Naive thymus-derived CD4-positive, alpha-beta T cell (primary cell): ENCODE measurements at regions of chr3 and their contacts with region 1.

Region 1: GRCh38 chr3:4834403-4834866 is 144.8 kb upstream of the BHLHE40 start:
- DNase-seq: peak in 5 of 9 donors; percentile 28 to 79 (median 39)
- ATAC-seq: peak; percentile 64
- H3K4me3 ChIP-seq: no peak overlapping the region
- H3K4me3 Mint-ChIP-seq: peak overlapping the region; percentile 21 to 86 (median 47)
- H3K27ac ChIP-seq: peak overlapping the region; percentile 55
- H3K27ac Mint-ChIP-seq: peak overlapping the region; percentile 74 to 99 (median 90)
- H3K4me1 ChIP-seq: peaks cover 53 to 67% of the 10 kb centered on the region in 2 donors
- H3K4me1 Mint-ChIP-seq: peaks cover 56 to 89% (median 80%) of the 10 kb centered on the region in 7 donors
- H3K27me3 ChIP-seq: no peaks in the 10 kb centered on the region
- H3K27me3 Mint-ChIP-seq: peaks cover 0 to 3% (median 0%) of the 10 kb centered on the region in 5 donors

Region 2: GRCh38 chr3:4741404-4742307 is 92.8 kb before region 1 on chr3:
- CTCF ChIA-PET with region 1: no interaction called
- POLR2A ChIA-PET with region 1: no interaction called
- intact Hi-C with region 1: loop called in 1 of 2 experiments (anchors 2 kb)
- DNase-seq: no peak
- ATAC-seq: peak; percentile 39
- H3K4me3 ChIP-seq: no peak overlapping the region
- H3K4me3 Mint-ChIP-seq: peak overlapping the region in 6 of 10 donors; percentile 26 to 75 (median 66)
- H3K27ac ChIP-seq: no peak overlapping the region
- H3K27ac Mint-ChIP-seq: peak overlapping the region in 5 of 9 donors; percentile 22 to 94 (median 67)
- H3K4me1 ChIP-seq: peaks cover 37 to 43% of the 10 kb centered on the region in 2 donors
- H3K4me1 Mint-ChIP-seq: peaks cover 44 to 70% (median 51%) of the 10 kb centered on the region in 7 donors
- H3K27me3 ChIP-seq: no peaks in the 10 kb centered on the region
- H3K27me3 Mint-ChIP-seq: no peaks in the 10 kb centered on the region

Region 3: GRCh38 chr3:4845882-4846281 is 11.4 kb after region 1 on chr3:
- CTCF ChIA-PET with region 1: interaction called, 3 read pairs
- POLR2A ChIA-PET with region 1: interaction called, 7 read pairs
- intact Hi-C with region 1: loop called (anchors 1 kb)
- DNase-seq: peak in 7 of 9 donors; percentile 43 to 76 (median 60)
- ATAC-seq: peak; percentile 87
- H3K4me3 ChIP-seq: no peak overlapping the region
- H3K4me3 Mint-ChIP-seq: peak overlapping the region in 9 of 10 donors; percentile 2 to 68 (median 46)
- H3K27ac ChIP-seq: peak overlapping the region; percentile 81
- H3K27ac Mint-ChIP-seq: peak overlapping the region; percentile 57 to 93 (median 76)
- H3K4me1 ChIP-seq: peaks cover 38 to 87% of the 10 kb centered on the region in 2 donors
- H3K4me1 Mint-ChIP-seq: peaks cover 39 to 99% (median 93%) of the 10 kb centered on the region in 7 donors
- H3K27me3 ChIP-seq: no peaks in the 10 kb centered on the region
- H3K27me3 Mint-ChIP-seq: no peaks in the 10 kb centered on the region

Region 4: GRCh38 chr3:4888913-4889846 is 54.7 kb after region 1 on chr3:
- CTCF ChIA-PET with region 1: interaction called, 3 read pairs
- POLR2A ChIA-PET with region 1: no interaction called
- intact Hi-C with region 1: loop called in 1 of 2 experiments (anchors 1 kb)
- DNase-seq: peak in 6 of 9 donors; percentile 9 to 51 (median 39)
- ATAC-seq: peak; percentile 90
- H3K4me3 ChIP-seq: no peak overlapping the region
- H3K4me3 Mint-ChIP-seq: peak overlapping the region in 8 of 10 donors; percentile 0 to 63 (median 36)
- H3K27ac ChIP-seq: no peak overlapping the region
- H3K27ac Mint-ChIP-seq: peak overlapping the region in 7 of 9 donors; percentile 18 to 91 (median 57)
- H3K4me1 ChIP-seq: peaks cover 13 to 15% of the 10 kb centered on the region in 2 donors
- H3K4me1 Mint-ChIP-seq: peaks cover 17 to 39% (median 18%) of the 10 kb centered on the region in 7 donors
- H3K27me3 ChIP-seq: no peaks in the 10 kb centered on the region
- H3K27me3 Mint-ChIP-seq: no peaks in the 10 kb centered on the region

Region 5: GRCh38 chr3:5006755-5007202 is 172.3 kb after region 1 on chr3:
- CTCF ChIA-PET with region 1: no interaction called
- POLR2A ChIA-PET with region 1: no interaction called
- intact Hi-C with region 1: loop called in 1 of 2 experiments (anchors 2 kb)
- DNase-seq: peak in 2 of 9 donors; percentile 22 to 82
- ATAC-seq: peak; percentile 83
- H3K4me3 ChIP-seq: no peak overlapping the region
- H3K4me3 Mint-ChIP-seq: peak overlapping the region in 2 of 10 donors; percentile 42 to 55
- H3K27ac ChIP-seq: no peak overlapping the region
- H3K27ac Mint-ChIP-seq: peak overlapping the region in 5 of 9 donors; percentile 28 to 82 (median 54)
- H3K4me1 ChIP-seq: peaks cover 0 to 39% of the 10 kb centered on the region in 2 donors
- H3K4me1 Mint-ChIP-seq: peaks cover 0 to 67% (median 7%) of the 10 kb centered on the region in 7 donors
- H3K27me3 ChIP-seq: no peaks in the 10 kb centered on the region
- H3K27me3 Mint-ChIP-seq: peaks cover 0 to 8% (median 0%) of the 10 kb centered on the region in 5 donors

Region 6: DNA sequence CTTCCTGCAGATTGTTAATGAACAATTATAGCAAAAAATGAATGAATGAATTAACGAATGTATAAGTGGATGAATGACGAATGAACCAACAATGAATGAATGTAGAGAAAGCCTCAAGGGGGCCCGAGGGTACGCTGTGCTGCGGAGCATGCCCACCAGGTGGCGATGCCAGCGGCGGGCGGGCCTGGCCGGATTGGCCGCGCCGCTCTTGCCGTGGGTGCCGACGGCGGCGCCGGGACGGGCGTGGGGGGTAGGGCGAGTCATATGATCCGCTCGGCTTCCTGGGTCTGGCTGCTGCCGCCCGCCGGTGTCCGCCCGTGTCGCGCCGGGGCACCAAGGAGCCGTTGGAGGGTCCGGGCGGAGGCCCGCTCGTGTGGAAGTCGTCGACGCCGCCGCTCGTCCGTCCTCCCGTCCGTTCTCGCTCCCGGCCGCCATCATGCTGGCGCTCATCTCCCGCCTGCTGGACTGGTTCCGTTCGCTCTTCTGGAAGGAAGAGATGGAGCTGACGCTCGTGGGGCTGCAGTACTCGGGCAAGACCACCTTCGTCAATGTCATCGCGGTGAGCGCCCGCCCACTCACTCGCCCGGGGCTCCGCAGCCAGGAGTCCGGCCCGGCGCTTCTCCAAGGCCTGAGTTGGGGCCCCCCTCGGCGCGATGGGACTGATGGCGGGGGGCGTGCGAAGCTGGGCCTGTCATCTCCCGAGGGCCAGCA is 287.8 kb after region 1 on chr3 and contains the start of gene ARL8B:
- CTCF ChIA-PET with region 1: no interaction called
- POLR2A ChIA-PET with region 1: no interaction called
- intact Hi-C with region 1: loop called in 1 of 2 experiments (anchors 2 kb)
- DNase-seq: peak; percentile 82 to 97 (median 89)
- ATAC-seq: peak; percentile 100
- H3K4me3 ChIP-seq: peak within 1 kb of the TSS; percentile 92
- H3K4me3 Mint-ChIP-seq: peak within 1 kb of the TSS; percentile 81 to 96 (median 88)
- H3K27ac ChIP-seq: peak within 1 kb of the TSS; percentile 88
- H3K27ac Mint-ChIP-seq: peak within 1 kb of the TSS; percentile 79 to 96 (median 88)
- H3K4me1 ChIP-seq: peaks cover 22% of the 10 kb centered on the region in 2 donors
- H3K4me1 Mint-ChIP-seq: peaks cover 25 to 54% (median 47%) of the 10 kb centered on the region in 7 donors
- H3K27me3 ChIP-seq: no peaks in the 10 kb centered on the region
- H3K27me3 Mint-ChIP-seq: no peaks in the 10 kb centered on the region
- total RNA-seq, gene ARL8B: 43.7 to 61.6 (median 48.4) TPM

Region 7: GRCh38 chr3:5194341-5195159 is 360.1 kb after region 1 on chr3:
- CTCF ChIA-PET with region 1: no interaction called
- POLR2A ChIA-PET with region 1: no interaction called
- intact Hi-C with region 1: loop called in 1 of 2 experiments (anchors 5 kb)
- DNase-seq: peak in 1 of 9 donors; percentile 69
- ATAC-seq: peak; percentile 54
- H3K4me3 ChIP-seq: no peak overlapping the region
- H3K4me3 Mint-ChIP-seq: peak overlapping the region; percentile 2 to 78 (median 46)
- H3K27ac ChIP-seq: peak overlapping the region; percentile 64
- H3K27ac Mint-ChIP-seq: peak overlapping the region; percentile 63 to 96 (median 93)
- H3K4me1 ChIP-seq: peaks cover 76 to 88% of the 10 kb centered on the region in 2 donors
- H3K4me1 Mint-ChIP-seq: peaks cover 73 to 90% (median 87%) of the 10 kb centered on the region in 7 donors
- H3K27me3 ChIP-seq: no peaks in the 10 kb centered on the region
- H3K27me3 Mint-ChIP-seq: no peaks in the 10 kb centered on the region

Region 8: GRCh38 chr3:5304789-5305683 is 470.6 kb after region 1 on chr3:
- CTCF ChIA-PET with region 1: no interaction called
- POLR2A ChIA-PET with region 1: no interaction called
- intact Hi-C with region 1: no loop called
- DNase-seq: peak in 4 of 9 donors; percentile 6 to 22 (median 7)
- ATAC-seq: no peak
- H3K4me3 ChIP-seq: no peak overlapping the region
- H3K4me3 Mint-ChIP-seq: no peak overlapping the region
- H3K27ac ChIP-seq: no peak overlapping the region
- H3K27ac Mint-ChIP-seq: no peak overlapping the region
- H3K4me1 ChIP-seq: no peaks in the 10 kb centered on the region
- H3K4me1 Mint-ChIP-seq: no peaks in the 10 kb centered on the region
- H3K27me3 ChIP-seq: no peaks in the 10 kb centered on the region
- H3K27me3 Mint-ChIP-seq: peaks cover 0 to 5% (median 0%) of the 10 kb centered on the region in 5 donors